ENCODE measurements at regions of chr14 and their contacts with region 1.

Region 1: GRCh38 chr14:21455911-21456667 is at the start of gene CHD8:
- DNase-seq: peak; percentile 100
- H3K4me3 Mint-ChIP-seq: peak within 1 kb of the TSS; percentile 91
- H3K27ac Mint-ChIP-seq: peak within 1 kb of the TSS; percentile 98
- H3K4me1 Mint-ChIP-seq: peaks cover 37% of the 10 kb centered on the region
- H3K27me3 Mint-ChIP-seq: no peaks in the 10 kb centered on the region
- total RNA-seq, gene CHD8: 73.9 to 75.5 TPM

Region 2: DNA sequence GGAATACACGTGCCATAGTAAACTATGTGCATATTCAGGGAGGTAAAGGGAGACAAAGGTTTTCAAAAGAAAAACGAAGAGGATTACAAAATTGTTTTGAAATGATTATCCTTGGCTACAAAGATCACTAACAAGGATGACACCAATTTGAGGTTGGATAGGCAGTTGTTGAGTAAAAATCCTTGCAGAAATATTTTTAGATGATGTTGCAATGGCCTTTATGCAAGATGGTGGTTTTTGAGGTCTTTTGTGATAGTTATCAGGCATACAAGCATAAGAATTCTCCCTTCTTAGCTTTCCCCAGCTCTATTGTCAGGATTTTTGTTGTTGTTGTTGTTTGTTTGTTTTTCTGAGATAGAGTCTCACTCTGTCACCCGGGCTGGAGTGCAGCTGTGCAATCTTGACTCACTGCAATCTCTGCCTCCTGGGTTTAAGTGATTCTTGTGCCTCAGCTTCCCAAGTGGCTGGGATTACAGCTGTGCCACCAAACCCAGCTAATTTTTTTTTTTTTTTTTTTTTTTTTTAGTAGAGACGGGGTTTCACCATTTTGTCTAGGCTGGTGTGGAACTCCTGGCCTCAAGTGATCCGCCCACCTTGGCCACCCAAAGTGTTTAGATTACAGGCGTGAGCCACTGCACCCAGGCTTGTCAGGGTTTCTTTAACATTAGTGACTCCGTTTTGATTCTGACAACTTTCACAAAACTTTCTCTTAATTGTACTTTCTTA is 661.3 kb before region 1 on chr14:
- CTCF ChIA-PET with region 1: no interaction called
- intact Hi-C with region 1: no loop called
- DNase-seq: no peak
- H3K4me3 Mint-ChIP-seq: no peak overlapping the region
- H3K27ac Mint-ChIP-seq: no peak overlapping the region
- H3K4me1 Mint-ChIP-seq: peaks cover 2% of the 10 kb centered on the region
- H3K27me3 Mint-ChIP-seq: no peaks in the 10 kb centered on the region

Region 3: GRCh38 chr14:21308479-21309237 is 147.4 kb before region 1 on chr14:
- CTCF ChIA-PET with region 1: no interaction called
- intact Hi-C with region 1: loop called (anchors 1 kb)
- DNase-seq: peak; percentile 94
- H3K4me3 Mint-ChIP-seq: peak overlapping the region; percentile 66
- H3K27ac Mint-ChIP-seq: peak overlapping the region; percentile 87
- H3K4me1 Mint-ChIP-seq: peaks cover 23% of the 10 kb centered on the region
- H3K27me3 Mint-ChIP-seq: no peaks in the 10 kb centered on the region

Region 4: DNA sequence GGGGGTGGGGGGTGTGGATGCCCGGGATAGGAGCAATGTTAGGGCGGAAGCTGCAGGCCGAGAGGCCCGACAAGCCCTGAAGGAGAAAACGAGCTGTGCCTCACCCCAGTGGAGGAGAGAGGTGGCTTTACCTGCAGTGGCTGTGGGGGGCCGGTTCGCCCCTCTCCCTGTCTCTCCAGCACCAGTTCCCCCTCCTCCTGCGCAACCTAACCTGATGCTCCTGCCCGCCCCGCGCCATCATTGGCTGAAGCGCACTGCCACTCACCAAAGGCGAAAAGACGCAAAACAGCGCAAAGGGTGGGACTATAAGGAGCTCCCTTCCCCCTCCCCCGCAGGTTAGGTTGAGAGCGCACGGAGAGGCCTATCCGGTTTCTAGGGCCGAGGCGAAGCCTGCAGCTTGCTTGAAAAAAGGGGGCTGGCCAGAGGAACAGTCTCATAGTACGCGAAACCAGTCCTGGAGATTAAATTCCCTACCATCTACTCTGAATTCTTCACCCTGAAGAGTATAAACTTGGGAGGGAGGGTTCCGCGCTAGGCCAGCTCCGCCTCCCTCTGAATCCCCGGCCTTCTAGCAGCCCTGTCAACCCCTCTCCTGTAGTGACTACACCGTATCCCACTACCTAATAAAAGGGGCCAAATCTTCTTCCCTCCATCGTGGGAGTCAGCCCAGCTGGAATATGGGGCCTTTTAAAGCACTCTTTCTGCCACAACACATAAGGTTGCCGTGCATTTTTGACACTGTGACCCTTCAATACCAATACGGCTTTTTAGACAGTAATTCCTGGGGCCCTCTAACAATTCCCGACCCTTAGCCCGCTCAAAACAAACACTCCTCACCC is 18.8 kb before region 1 on chr14:
- CTCF ChIA-PET with region 1: interaction called, 13 read pairs
- intact Hi-C with region 1: loop called (anchors 1 kb)
- DNase-seq: peak; percentile 100
- H3K4me3 Mint-ChIP-seq: peak overlapping the region; percentile 84
- H3K27ac Mint-ChIP-seq: peak overlapping the region; percentile 90
- H3K4me1 Mint-ChIP-seq: peaks cover 52% of the 10 kb centered on the region
- H3K27me3 Mint-ChIP-seq: no peaks in the 10 kb centered on the region

Region 5: GRCh38 chr14:21498553-21499526 is 42.8 kb after region 1 on chr14:
- CTCF ChIA-PET with region 1: interaction called, 16 read pairs
- intact Hi-C with region 1: no loop called
- DNase-seq: peak; percentile 32
- H3K4me3 Mint-ChIP-seq: no peak overlapping the region
- H3K27ac Mint-ChIP-seq: peak overlapping the region; percentile 51
- H3K4me1 Mint-ChIP-seq: peaks cover 18% of the 10 kb centered on the region
- H3K27me3 Mint-ChIP-seq: no peaks in the 10 kb centered on the region

Region 6: DNA sequence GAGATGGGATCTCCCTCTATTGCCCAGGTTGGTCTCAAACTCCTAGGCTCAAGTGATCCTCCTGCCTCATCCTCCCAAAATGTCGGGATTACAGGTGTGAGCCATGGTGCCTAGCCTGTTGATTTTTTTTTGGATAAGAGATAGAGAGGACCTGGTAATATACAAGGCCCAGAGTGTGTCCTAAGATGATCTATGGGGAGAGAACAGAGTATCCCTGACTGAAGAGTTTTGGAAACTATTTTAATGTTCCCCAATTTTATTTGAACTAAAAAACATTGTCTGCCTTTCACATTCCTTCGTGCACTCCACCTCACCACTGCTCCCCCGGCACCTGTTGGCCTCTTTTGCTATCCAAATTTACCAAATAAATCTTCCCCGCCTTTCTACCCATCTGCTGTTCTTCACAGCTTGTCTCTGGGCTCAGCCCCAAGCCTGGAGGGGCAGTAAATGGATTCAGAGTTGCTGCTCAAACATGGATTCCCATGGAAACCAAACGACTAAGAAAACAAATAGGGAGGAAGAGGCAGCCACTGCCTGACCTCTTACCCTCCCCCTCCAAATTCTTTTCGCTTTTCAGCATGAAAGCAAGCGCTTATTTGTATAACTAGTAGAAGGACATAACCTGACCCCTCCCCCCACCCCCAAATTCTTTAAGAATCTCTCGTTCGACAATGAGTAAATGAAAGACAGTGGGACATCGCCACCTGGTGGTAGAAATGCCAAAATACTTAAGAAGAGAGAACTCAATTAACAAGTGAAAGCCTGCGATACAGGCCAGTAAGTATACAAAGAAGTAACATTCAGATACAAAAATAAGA is 101.2 kb after region 1 on chr14:
- CTCF ChIA-PET with region 1: interaction called, 6 read pairs
- intact Hi-C with region 1: loop called (anchors 1 kb)
- DNase-seq: peak; percentile 91
- H3K4me3 Mint-ChIP-seq: peak overlapping the region; percentile 27
- H3K27ac Mint-ChIP-seq: no peak overlapping the region
- H3K4me1 Mint-ChIP-seq: peaks cover 6% of the 10 kb centered on the region
- H3K27me3 Mint-ChIP-seq: no peaks in the 10 kb centered on the region

Region 7: DNA sequence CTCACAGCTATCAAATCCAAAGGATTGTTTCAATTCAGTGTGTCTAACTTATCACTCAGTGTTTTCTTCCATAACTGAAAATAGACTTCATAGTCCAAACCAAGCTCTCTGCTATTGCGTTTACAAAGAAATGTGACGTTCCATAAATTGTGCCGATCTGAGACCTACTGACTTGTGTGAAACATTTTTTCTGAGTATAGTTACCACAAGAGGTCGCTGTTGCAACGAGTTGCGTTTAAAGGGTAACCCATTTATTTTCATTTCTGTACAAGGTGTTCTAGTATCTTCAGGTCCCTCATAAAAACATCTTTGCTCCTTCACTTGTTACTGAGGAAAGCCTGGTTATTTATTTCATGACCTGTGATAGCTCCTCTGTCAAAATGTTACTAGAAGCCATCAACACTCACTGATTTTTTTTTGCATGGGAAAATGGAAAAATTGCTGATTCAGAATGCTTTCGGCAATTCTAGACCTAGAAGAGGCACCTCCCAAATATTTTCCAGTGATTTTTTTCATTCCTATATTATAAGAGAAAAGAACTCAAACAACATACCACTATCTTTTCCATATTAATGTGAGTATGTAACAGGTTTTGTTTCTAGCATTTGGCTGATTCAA is 278.5 kb after region 1 on chr14:
- CTCF ChIA-PET with region 1: no interaction called
- intact Hi-C with region 1: no loop called
- DNase-seq: peak; percentile 66
- H3K4me3 Mint-ChIP-seq: peak overlapping the region; percentile 61
- H3K27ac Mint-ChIP-seq: peak overlapping the region; percentile 65
- H3K4me1 Mint-ChIP-seq: peaks cover 16% of the 10 kb centered on the region
- H3K27me3 Mint-ChIP-seq: peaks cover 16% of the 10 kb centered on the region